HCT116 (cell line): ENCODE measurements at regions of chr22 and their contacts with region 1.

Region 1: GRCh38 chr22:42863349-42863961 is 6.4 kb upstream of the ARFGAP3 start:
- DNase-seq: peak; percentile 43
- ATAC-seq: no peak
- H3K4me3 ChIP-seq: peak overlapping the region in 1 of 2 experiments; percentile 13; a peak in 2 of 4 replicates
- H3K27ac ChIP-seq: peak overlapping the region; percentile 38; the same call in 1 of the 2 replicates
- H3K4me1 ChIP-seq: peaks cover 17 to 35% of the 10 kb centered on the region in 2 experiments
- H3K27me3 ChIP-seq: no peaks in the 10 kb centered on the region
- CTCF ChIP-seq: no peak
- POLR2A ChIP-seq: no peak
- RAD21 ChIP-seq: no peak

Region 2: GRCh38 chr22:42635531-42635930 is 227.9 kb before region 1 on chr22:
- CTCF ChIA-PET with region 1: no interaction called
- POLR2A ChIA-PET with region 1: no interaction called
- RAD21 ChIA-PET with region 1: no interaction called
- intact Hi-C with region 1: loop called (anchors 10 kb)
- DNase-seq: peak; percentile 85
- ATAC-seq: peak; percentile 91
- H3K4me3 ChIP-seq: peak overlapping the region; percentile 9 to 44; a peak in 2 of 4 replicates
- H3K27ac ChIP-seq: peak overlapping the region; percentile 90
- H3K4me1 ChIP-seq: peaks cover 14 to 52% of the 10 kb centered on the region in 2 experiments
- H3K27me3 ChIP-seq: no peaks in the 10 kb centered on the region
- CTCF ChIP-seq: no peak
- POLR2A ChIP-seq: no peak
- RAD21 ChIP-seq: no peak

Region 3: GRCh38 chr22:42662114-42663021 is 201.1 kb before region 1 on chr22:
- CTCF ChIA-PET with region 1: interaction called, 6 read pairs
- POLR2A ChIA-PET with region 1: no interaction called
- RAD21 ChIA-PET with region 1: no interaction called
- intact Hi-C with region 1: loop called (anchors 2 kb)
- DNase-seq: no peak
- ATAC-seq: peak; percentile 90
- H3K4me3 ChIP-seq: peak overlapping the region; percentile 42 to 55
- H3K27ac ChIP-seq: no peak overlapping the region; the same call in 1 of the 2 replicates
- H3K4me1 ChIP-seq: peaks cover 0 to 4% of the 10 kb centered on the region in 2 experiments; a peak in 1 of 4 replicates
- H3K27me3 ChIP-seq: no peaks in the 10 kb centered on the region
- CTCF ChIP-seq: peak; percentile 72 to 82 (median 73); a peak in 5 of 6 replicates
- POLR2A ChIP-seq: peak; percentile 14
- RAD21 ChIP-seq: peak; percentile 79

Region 4: GRCh38 chr22:42912059-42912458 is 48.6 kb after region 1 on chr22:
- CTCF ChIA-PET with region 1: no interaction called
- POLR2A ChIA-PET with region 1: no interaction called
- RAD21 ChIA-PET with region 1: no interaction called
- intact Hi-C with region 1: no loop called
- DNase-seq: no peak
- ATAC-seq: no peak
- H3K4me3 ChIP-seq: no peak overlapping the region
- H3K27ac ChIP-seq: no peak overlapping the region
- H3K4me1 ChIP-seq: peaks cover 0 to 7% of the 10 kb centered on the region in 2 experiments; a peak in 1 of 4 replicates
- H3K27me3 ChIP-seq: no peaks in the 10 kb centered on the region
- CTCF ChIP-seq: no peak
- POLR2A ChIP-seq: no peak
- RAD21 ChIP-seq: no peak

Region 5: GRCh38 chr22:42964994-42965699 is 101.7 kb after region 1 on chr22:
- CTCF ChIA-PET with region 1: interaction called, 4 read pairs
- POLR2A ChIA-PET with region 1: interaction called, 3 read pairs
- RAD21 ChIA-PET with region 1: interaction called, 4 to 10 read pairs
- intact Hi-C with region 1: no loop called
- DNase-seq: peak; percentile 86
- ATAC-seq: peak; percentile 73
- H3K4me3 ChIP-seq: no peak overlapping the region
- H3K27ac ChIP-seq: peak overlapping the region; percentile 5; the same call in 1 of the 2 replicates
- H3K4me1 ChIP-seq: peaks cover 51 to 67% of the 10 kb centered on the region in 2 experiments
- H3K27me3 ChIP-seq: no peaks in the 10 kb centered on the region
- CTCF ChIP-seq: no peak
- POLR2A ChIP-seq: no peak
- RAD21 ChIP-seq: no peak